ENCODE measurements at regions of chr19 and their contacts with region 1.

Region 1: DNA sequence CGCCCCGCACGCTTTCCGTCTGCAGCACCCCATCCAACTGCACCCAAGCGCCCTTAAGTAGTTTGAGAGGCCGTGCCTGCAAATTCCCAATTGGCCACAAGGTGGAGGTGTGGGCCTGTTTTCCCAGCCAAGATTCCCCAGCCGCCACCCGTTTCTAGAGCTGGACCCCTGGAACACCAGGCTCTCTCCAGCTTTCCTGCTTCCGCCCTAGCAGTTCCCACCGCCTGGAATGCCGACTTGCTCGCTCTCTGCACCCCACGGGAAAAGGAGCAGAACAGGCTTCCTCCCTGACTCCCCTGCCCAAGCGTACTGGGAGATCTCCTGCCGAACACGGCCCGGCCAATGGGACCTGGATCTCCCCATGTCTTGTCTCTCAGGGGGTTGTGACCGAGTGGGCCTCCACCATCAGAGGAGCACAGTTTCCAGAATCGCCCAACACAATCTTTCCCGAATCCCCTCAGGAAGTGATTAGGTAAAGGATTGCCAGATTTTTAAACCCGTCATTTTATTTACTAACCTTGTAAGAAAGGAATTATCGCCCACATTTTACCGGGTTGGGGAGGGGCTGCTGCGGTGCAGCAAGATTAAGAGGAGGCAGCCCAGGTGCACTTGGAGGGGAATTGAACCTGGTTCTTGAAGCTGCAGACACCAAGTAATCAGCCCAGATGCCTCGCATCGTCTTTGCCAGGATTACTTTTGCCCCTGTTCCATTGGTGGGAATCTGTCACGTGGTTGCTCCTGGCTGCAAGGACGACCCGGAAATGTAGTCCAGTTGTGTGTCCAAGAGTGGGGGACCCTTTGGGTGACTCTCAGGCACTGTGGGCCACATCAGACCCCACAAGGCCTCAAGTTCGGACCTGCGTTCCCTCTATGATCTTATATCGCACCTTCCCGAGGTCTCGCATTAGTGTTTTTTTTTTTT is 3.5 kb upstream of the NAPSA start:
- DNase-seq: peak; percentile 83
- ATAC-seq: peak; percentile 72
- H3K4me3 Mint-ChIP-seq: peak overlapping the region; percentile 83
- H3K27ac Mint-ChIP-seq: peak overlapping the region; percentile 85
- H3K4me1 Mint-ChIP-seq: peaks cover 36% of the 10 kb centered on the region
- H3K27me3 Mint-ChIP-seq: no peaks in the 10 kb centered on the region

Region 2: DNA sequence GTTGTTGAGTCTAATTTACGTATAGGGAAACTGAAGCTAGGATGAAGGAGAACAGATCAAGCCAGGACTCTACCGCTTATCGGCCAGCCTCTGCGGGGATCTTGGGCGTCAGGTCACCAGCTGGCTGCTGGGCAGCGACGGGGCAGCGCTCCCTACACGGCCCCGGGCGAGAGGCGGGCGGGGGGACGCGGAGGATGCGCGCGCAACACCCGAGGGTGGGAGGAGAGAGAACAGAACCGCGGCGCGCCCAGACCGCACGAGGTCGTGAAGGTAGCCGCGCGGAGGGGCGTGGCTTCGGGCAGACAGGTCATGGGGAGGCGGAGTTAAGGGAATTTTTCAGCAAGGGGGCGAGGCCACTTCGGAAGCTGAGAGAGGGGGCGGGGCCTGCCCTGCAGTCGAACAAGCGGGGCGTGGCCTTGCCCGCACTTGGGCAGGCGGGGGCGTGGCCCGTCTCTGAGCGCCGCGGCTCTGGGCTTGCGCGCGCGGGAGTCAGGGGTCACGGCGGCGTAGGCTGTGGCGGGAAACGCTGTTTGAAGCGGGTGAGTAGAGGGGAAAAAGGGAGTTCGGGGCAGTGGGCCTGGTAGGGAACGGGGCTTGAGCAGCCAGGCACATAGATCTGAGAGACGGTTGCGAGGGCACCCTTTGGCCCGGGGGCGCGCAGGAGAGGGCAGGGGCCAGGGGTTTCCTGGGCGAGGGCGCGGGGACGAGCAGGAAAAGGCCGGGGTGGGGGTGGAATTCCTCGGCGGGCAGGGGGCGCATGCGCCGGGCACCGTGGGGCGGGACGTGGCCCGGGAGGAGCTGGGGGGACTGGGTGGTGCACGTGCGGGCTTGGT is 15.2 kb after region 1 on chr19 and contains the start of gene POLD1:
- CTCF ChIA-PET with region 1: interaction called, 10 read pairs
- POLR2A ChIA-PET with region 1: interaction called, 4 read pairs
- DNase-seq: peak; percentile 99
- ATAC-seq: peak; percentile 89
- H3K4me3 Mint-ChIP-seq: peak within 1 kb of the TSS; percentile 94
- H3K27ac Mint-ChIP-seq: peak within 1 kb of the TSS; percentile 98
- H3K4me1 Mint-ChIP-seq: peaks cover 32% of the 10 kb centered on the region
- H3K27me3 Mint-ChIP-seq: no peaks in the 10 kb centered on the region
- total RNA-seq, gene POLD1: 163 to 181 TPM

Region 3: DNA sequence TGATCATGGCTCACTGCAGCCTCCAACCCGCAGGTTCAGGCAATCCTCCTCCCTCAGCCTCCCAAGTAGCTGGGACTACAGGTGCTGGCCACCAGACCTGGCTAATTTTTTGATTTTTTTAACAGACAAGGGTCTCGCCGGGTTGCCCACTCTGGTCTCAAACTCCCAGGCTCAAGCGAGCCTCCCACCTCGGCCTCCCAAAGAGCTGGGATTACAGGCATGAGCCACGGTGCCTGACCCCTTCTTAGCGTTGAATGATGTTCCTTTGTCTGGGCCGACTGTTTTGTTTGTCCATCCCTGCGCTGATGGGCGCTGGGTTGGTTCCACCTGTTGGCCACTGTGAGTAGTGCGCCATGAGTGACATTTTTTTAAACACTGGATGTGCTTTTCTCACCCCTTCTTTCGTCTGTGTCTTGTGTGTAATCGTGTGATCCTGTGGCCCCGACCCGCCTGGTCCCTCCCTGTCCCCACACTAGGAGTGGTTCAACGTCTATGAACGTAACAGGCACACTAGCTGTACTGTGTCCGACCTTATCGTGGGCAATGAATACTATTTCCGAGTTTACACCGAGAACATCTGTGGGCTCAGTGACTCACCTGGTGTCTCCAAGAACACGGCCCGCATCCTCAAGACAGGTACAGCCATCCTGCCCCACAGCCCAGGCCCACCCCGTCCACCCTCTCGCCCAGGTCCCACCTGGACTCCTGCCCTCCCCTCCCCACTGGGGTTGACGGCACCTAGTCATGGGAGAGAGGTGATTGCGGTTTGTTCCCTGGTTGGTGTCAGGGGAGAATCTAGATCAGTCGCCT is 92.4 kb after region 1 on chr19:
- CTCF ChIA-PET with region 1: interaction called, 35 read pairs
- POLR2A ChIA-PET with region 1: no interaction called
- DNase-seq: peak; percentile 76
- ATAC-seq: peak; percentile 84
- H3K4me3 Mint-ChIP-seq: no peak overlapping the region
- H3K27ac Mint-ChIP-seq: no peak overlapping the region
- H3K4me1 Mint-ChIP-seq: peaks cover 10% of the 10 kb centered on the region
- H3K27me3 Mint-ChIP-seq: peaks cover 9% of the 10 kb centered on the region

Measured in activated CD8-positive, alpha-beta T cell treated with anti-CD3 and anti-CD28 coated beads, Interleukin-2, amount 10 ng/mL, durations not matched to agents 7 days and 5 days (primary cell).